CD8-positive, alpha-beta T cell (primary cell): ENCODE measurements at regions of chr7 and their contacts with region 1.

Region 1: GRCh38 chr7:29639881-29640595 is 76.4 kb downstream of the PRR15 start:
- DNase-seq: no peak
- ATAC-seq: no peak
- H3K4me3 ChIP-seq: no peak overlapping the region
- H3K4me3 Mint-ChIP-seq: no peak overlapping the region
- H3K27ac ChIP-seq: no peak overlapping the region
- H3K27ac Mint-ChIP-seq: no peak overlapping the region
- H3K4me1 ChIP-seq: no peaks in the 10 kb centered on the region
- H3K4me1 Mint-ChIP-seq: no peaks in the 10 kb centered on the region
- H3K27me3 ChIP-seq: no peaks in the 10 kb centered on the region
- H3K27me3 Mint-ChIP-seq: no peaks in the 10 kb centered on the region
- CTCF ChIP-seq: no peak

Region 2: GRCh38 chr7:29652556-29652955 is 12.5 kb after region 1 on chr7:
- CTCF ChIA-PET with region 1: no interaction called
- POLR2A ChIA-PET with region 1: no interaction called
- intact Hi-C with region 1: no loop called
- DNase-seq: no peak
- ATAC-seq: no peak
- H3K4me3 ChIP-seq: no peak overlapping the region
- H3K4me3 Mint-ChIP-seq: no peak overlapping the region
- H3K27ac ChIP-seq: no peak overlapping the region
- H3K27ac Mint-ChIP-seq: no peak overlapping the region
- H3K4me1 ChIP-seq: no peaks in the 10 kb centered on the region
- H3K4me1 Mint-ChIP-seq: no peaks in the 10 kb centered on the region
- H3K27me3 ChIP-seq: no peaks in the 10 kb centered on the region
- H3K27me3 Mint-ChIP-seq: no peaks in the 10 kb centered on the region
- CTCF ChIP-seq: no peak

Region 3: DNA sequence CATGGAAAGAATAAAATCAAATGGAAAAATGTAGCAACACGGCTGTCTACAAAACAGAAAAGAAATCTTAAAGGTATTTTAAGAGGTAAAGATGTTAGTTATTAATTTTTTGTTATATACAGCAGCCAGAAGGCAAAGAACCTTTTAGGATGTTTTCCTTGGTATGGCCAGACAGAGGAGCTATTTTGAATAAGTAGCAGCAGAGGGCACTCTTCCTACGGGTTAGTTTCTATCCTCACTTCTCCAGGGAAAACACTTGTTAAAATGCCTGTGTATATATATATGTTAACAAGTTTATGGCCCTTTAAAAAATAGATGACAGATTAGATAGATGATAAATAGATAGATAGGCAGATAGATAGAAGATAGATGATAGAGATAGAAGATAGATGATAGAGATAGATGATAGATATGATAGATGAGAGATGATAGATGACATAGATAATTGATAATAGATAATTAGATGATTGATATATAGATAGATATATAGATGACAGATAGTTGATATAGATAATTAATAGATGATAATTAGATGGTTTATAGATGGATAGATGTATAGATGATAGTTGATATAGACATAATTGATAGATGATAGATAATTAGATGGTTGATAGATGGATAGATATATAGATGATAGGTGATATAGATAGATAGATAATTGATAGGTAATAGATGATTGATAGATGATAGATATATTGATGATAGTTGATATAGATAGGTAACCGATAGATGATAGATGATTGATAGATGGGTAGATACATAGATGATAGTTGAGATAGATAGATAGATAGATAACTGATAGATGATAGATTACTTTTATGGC is 108.5 kb after region 1 on chr7:
- CTCF ChIA-PET with region 1: no interaction called
- POLR2A ChIA-PET with region 1: no interaction called
- intact Hi-C with region 1: loop called in 1 of 2 experiments (anchors 10 kb)
- DNase-seq: peak in 1 of 9 experiments; percentile 8
- ATAC-seq: no peak
- H3K4me3 ChIP-seq: no peak overlapping the region
- H3K4me3 Mint-ChIP-seq: no peak overlapping the region
- H3K27ac ChIP-seq: no peak overlapping the region
- H3K27ac Mint-ChIP-seq: no peak overlapping the region
- H3K4me1 ChIP-seq: no peaks in the 10 kb centered on the region
- H3K4me1 Mint-ChIP-seq: no peaks in the 10 kb centered on the region
- H3K27me3 ChIP-seq: no peaks in the 10 kb centered on the region
- H3K27me3 Mint-ChIP-seq: peaks cover 6% of the 10 kb centered on the region
- CTCF ChIP-seq: no peak

Region 4: GRCh38 chr7:29921404-29922010 is 281.5 kb after region 1 on chr7:
- CTCF ChIA-PET with region 1: interaction called, 6 read pairs
- POLR2A ChIA-PET with region 1: no interaction called
- intact Hi-C with region 1: loop called (anchors 5 to 10 kb)
- DNase-seq: peak in 8 of 9 experiments; percentile 6 to 67 (median 40)
- ATAC-seq: peak; percentile 92
- H3K4me3 ChIP-seq: no peak overlapping the region
- H3K4me3 Mint-ChIP-seq: no peak overlapping the region
- H3K27ac ChIP-seq: no peak overlapping the region
- H3K27ac Mint-ChIP-seq: no peak overlapping the region
- H3K4me1 ChIP-seq: no peaks in the 10 kb centered on the region
- H3K4me1 Mint-ChIP-seq: no peaks in the 10 kb centered on the region
- H3K27me3 ChIP-seq: peaks cover 0 to 2% of the 10 kb centered on the region in 2 experiments
- H3K27me3 Mint-ChIP-seq: no peaks in the 10 kb centered on the region
- CTCF ChIP-seq: peak; percentile 90

Region 5: GRCh38 chr7:30062591-30062990 is 422.6 kb after region 1 on chr7:
- CTCF ChIA-PET with region 1: interaction called, 4 read pairs
- POLR2A ChIA-PET with region 1: no interaction called
- intact Hi-C with region 1: loop called (anchors 5 kb)
- DNase-seq: peak in 2 of 9 experiments; percentile 33 to 51
- ATAC-seq: peak; percentile 49
- H3K4me3 ChIP-seq: no peak overlapping the region
- H3K4me3 Mint-ChIP-seq: no peak overlapping the region
- H3K27ac ChIP-seq: no peak overlapping the region
- H3K27ac Mint-ChIP-seq: no peak overlapping the region
- H3K4me1 ChIP-seq: no peaks in the 10 kb centered on the region
- H3K4me1 Mint-ChIP-seq: peaks cover 7% of the 10 kb centered on the region
- H3K27me3 ChIP-seq: no peaks in the 10 kb centered on the region
- H3K27me3 Mint-ChIP-seq: no peaks in the 10 kb centered on the region
- CTCF ChIP-seq: peak; percentile 60

Region 6: GRCh38 chr7:30068067-30068466 is 428.0 kb after region 1 on chr7:
- CTCF ChIA-PET with region 1: no interaction called
- POLR2A ChIA-PET with region 1: no interaction called
- intact Hi-C with region 1: loop called (anchors 5 kb)
- DNase-seq: no peak
- ATAC-seq: no peak
- H3K4me3 ChIP-seq: no peak overlapping the region
- H3K4me3 Mint-ChIP-seq: no peak overlapping the region
- H3K27ac ChIP-seq: no peak overlapping the region
- H3K27ac Mint-ChIP-seq: no peak overlapping the region
- H3K4me1 ChIP-seq: no peaks in the 10 kb centered on the region
- H3K4me1 Mint-ChIP-seq: no peaks in the 10 kb centered on the region
- H3K27me3 ChIP-seq: no peaks in the 10 kb centered on the region
- H3K27me3 Mint-ChIP-seq: no peaks in the 10 kb centered on the region
- CTCF ChIP-seq: no peak

Region 7: GRCh38 chr7:30074422-30075030 is 434.5 kb after region 1 on chr7:
- CTCF ChIA-PET with region 1: no interaction called
- POLR2A ChIA-PET with region 1: no interaction called
- intact Hi-C with region 1: loop called (anchors 5 kb)
- DNase-seq: peak in 2 of 9 experiments; percentile 16 to 37
- ATAC-seq: no peak
- H3K4me3 ChIP-seq: no peak overlapping the region
- H3K4me3 Mint-ChIP-seq: no peak overlapping the region
- H3K27ac ChIP-seq: no peak overlapping the region
- H3K27ac Mint-ChIP-seq: no peak overlapping the region
- H3K4me1 ChIP-seq: no peaks in the 10 kb centered on the region
- H3K4me1 Mint-ChIP-seq: no peaks in the 10 kb centered on the region
- H3K27me3 ChIP-seq: no peaks in the 10 kb centered on the region
- H3K27me3 Mint-ChIP-seq: no peaks in the 10 kb centered on the region
- CTCF ChIP-seq: peak; percentile 28